ENCODE measurements at regions of chr5 and their contacts with region 1.

Region 1: GRCh38 chr5:76601470-76601869 is 21.7 kb downstream of the F2RL2 start:
- DNase-seq: peak; percentile 82
- H3K4me3 ChIP-seq: no peak overlapping the region
- H3K27ac ChIP-seq: no peak overlapping the region
- H3K4me1 ChIP-seq: peaks cover 6% of the 10 kb centered on the region
- H3K27me3 ChIP-seq: peaks cover 17% of the 10 kb centered on the region

Region 2: GRCh38 chr5:75965292-75965691 is 636.2 kb before region 1 on chr5:
- in situ Hi-C with region 1: no loop called
- DNase-seq: no peak
- H3K4me3 ChIP-seq: no peak overlapping the region
- H3K27ac ChIP-seq: no peak overlapping the region
- H3K4me1 ChIP-seq: no peaks in the 10 kb centered on the region
- H3K27me3 ChIP-seq: no peaks in the 10 kb centered on the region

Region 3: GRCh38 chr5:76775921-76776320 is 174.5 kb after region 1 on chr5:
- in situ Hi-C with region 1: loop called (anchors 5 kb)
- DNase-seq: no peak
- H3K4me3 ChIP-seq: no peak overlapping the region
- H3K27ac ChIP-seq: no peak overlapping the region
- H3K4me1 ChIP-seq: peaks cover 4% of the 10 kb centered on the region; the same call in 1 of the 2 replicates
- H3K27me3 ChIP-seq: no peaks in the 10 kb centered on the region

Region 4: DNA sequence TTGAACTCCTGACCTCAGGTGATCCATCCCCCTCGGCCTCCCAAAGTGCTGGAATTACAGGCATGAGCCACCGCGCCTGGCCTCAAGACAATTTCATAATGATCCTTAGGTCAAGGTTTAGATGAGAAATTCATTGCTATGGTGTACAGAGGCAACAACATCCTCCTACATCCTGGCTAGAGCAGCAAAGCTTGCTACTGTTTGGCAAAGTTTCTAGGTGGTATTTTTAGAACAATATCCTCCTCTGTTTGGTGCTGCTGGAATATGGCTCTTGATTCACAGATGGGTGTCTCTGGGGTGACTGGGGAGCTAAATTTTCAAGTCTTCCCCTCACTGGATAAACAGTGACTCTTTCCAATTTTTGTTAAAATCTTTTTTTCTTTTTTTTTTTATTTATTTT is 382.0 kb after region 1 on chr5:
- in situ Hi-C with region 1: no loop called
- DNase-seq: no peak
- H3K4me3 ChIP-seq: no peak overlapping the region
- H3K27ac ChIP-seq: no peak overlapping the region
- H3K4me1 ChIP-seq: no peaks in the 10 kb centered on the region
- H3K27me3 ChIP-seq: peaks cover 13% of the 10 kb centered on the region

Region 5: GRCh38 chr5:77015938-77016569 is 414.6 kb after region 1 on chr5:
- in situ Hi-C with region 1: loop called (anchors 10 kb)
- DNase-seq: peak; percentile 66
- H3K4me3 ChIP-seq: no peak overlapping the region
- H3K27ac ChIP-seq: no peak overlapping the region
- H3K4me1 ChIP-seq: no peaks in the 10 kb centered on the region
- H3K27me3 ChIP-seq: peaks cover 19% of the 10 kb centered on the region

Region 6: DNA sequence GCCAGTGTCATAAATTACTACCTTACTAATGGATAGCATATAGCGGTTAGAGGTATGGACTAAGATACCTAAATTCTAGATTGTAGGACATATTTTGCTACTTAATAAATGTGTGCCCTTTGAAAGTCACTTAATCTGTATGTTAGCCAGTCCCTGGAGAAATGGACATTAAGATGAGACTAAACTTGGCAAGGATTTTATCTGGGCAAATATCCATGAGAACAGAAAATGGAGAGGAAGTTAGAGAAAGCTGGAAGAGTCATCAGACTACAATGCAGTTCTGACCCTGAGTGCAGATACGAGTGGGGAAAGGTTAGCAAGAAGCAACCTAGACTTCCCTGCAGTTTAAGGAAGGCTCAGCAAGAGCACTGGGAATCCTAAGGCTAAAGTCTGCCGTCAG is 1141.7 kb after region 1 on chr5:
- in situ Hi-C with region 1: no loop called
- DNase-seq: peak; percentile 22
- H3K4me3 ChIP-seq: no peak overlapping the region
- H3K27ac ChIP-seq: no peak overlapping the region
- H3K4me1 ChIP-seq: 0 out of 2 replicates have a peak, but pooled peaks cover 4% of the 10 kb centered on the region
- H3K27me3 ChIP-seq: no peaks in the 10 kb centered on the region